RWPE1 (cell line): ENCODE measurements at regions of chr12 and their contacts with region 1.

Region 1: GRCh38 chr12:47742253-47742825 is 16.3 kb downstream of the RAPGEF3 start:
- DNase-seq: peak; percentile 46
- H3K27ac ChIP-seq: no peak overlapping the region
- CTCF ChIP-seq: peak; percentile 96

Region 2: GRCh38 chr12:47586952-47587669 is 155.2 kb before region 1 on chr12:
- CTCF ChIA-PET with region 1: no interaction called
- POLR2A ChIA-PET with region 1: no interaction called
- DNase-seq: no peak
- H3K27ac ChIP-seq: no peak overlapping the region
- CTCF ChIP-seq: no peak

Region 3: DNA sequence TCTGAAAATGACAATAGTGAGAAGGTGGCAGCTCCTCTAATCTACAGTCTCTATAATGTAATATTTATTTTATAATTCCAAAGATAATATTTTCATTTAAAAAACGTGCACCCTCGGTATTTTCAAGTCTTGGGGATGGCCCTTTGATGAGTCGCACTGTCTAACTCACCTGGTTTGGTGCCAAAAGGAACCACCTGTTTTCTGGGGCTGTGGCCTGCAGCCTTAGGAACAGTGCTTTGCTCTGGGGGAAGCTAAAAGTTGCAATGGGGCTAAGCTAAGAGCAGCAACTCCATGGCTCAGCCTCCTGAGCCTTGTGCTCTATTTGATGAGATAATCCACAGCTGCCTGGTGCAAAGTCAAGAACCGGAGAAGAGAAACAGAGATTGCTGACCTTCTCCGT is 10.6 kb before region 1 on chr12:
- CTCF ChIA-PET with region 1: interaction called, 32 read pairs
- POLR2A ChIA-PET with region 1: no interaction called
- DNase-seq: no peak
- H3K27ac ChIP-seq: no peak overlapping the region
- CTCF ChIP-seq: no peak

Region 4: DNA sequence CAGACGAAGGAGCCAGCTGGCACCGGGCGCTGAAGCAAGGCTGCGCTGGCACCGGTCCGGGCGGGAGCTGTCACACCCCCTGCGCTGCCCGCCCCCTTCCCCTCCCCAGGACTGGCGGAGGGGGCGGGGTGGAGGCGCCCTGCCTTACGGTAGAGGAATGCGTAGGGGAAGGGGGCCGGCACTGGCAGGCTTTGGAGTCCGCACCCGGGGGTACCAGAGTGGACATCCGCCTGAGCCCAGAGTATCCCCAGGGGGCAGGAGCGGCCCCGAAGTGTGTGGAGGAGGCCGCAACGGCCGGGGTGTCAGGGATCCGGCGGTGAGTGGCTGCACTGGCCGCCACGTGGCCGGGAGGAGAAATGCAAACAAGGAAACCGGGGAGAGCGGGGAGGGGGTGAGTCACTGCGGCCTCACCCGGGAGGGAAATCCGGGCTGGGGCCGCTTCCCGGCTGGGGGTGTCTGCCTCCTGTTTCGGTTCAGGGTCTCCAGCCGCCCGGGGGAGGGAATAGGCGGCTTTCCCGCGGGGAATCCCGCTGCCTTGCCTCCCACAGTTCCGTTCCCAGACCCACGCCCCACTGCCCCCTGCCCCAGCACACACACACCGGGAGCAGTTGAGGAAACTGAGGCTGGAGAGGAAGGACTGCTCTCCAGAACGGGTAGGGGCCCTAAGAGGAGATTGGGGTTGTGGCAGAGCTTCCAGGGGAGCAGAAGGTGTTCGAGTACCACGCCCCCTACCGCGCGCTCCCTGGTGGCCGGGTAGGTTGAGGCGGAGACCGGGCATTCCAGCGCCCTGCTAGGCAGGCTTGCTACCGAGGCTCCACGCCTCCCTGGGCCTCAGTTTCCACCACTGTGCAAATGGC is 16.7 kb after region 1 on chr12 and contains the start of gene RAPGEF3:
- CTCF ChIA-PET with region 1: interaction called, 48 read pairs
- POLR2A ChIA-PET with region 1: no interaction called
- DNase-seq: peak; percentile 93
- H3K27ac ChIP-seq: peak within 1 kb of the TSS; percentile 80
- CTCF ChIP-seq: peak; percentile 70

Region 5: GRCh38 chr12:47767216-47767724 is 24.9 kb after region 1 on chr12:
- CTCF ChIA-PET with region 1: interaction called, 167 read pairs
- POLR2A ChIA-PET with region 1: no interaction called
- DNase-seq: peak; percentile 41
- H3K27ac ChIP-seq: no peak overlapping the region; the same call in 1 of the 2 replicates
- CTCF ChIP-seq: peak; percentile 16; the same call in 1 of the 2 replicates

Region 6: GRCh38 chr12:47779301-47779942 is 37.1 kb after region 1 on chr12:
- CTCF ChIA-PET with region 1: interaction called, 167 read pairs
- POLR2A ChIA-PET with region 1: interaction called, 3 read pairs
- DNase-seq: peak; percentile 77
- H3K27ac ChIP-seq: peak overlapping the region; percentile 90
- CTCF ChIP-seq: peak; percentile 93